ENCODE measurements at regions of chr22 and their contacts with region 1.

Region 1: GRCh38 chr22:24951942-24952836 is at the start of gene KIAA1671:
- DNase-seq: peak in 1 of 2 donors; percentile 88
- H3K4me3 ChIP-seq: peak within 1 kb of the TSS; percentile 82 to 94
- H3K27ac ChIP-seq: peak within 1 kb of the TSS; percentile 39 to 51
- H3K4me1 ChIP-seq: no peaks in the 10 kb centered on the region
- H3K27me3 ChIP-seq: no peaks in the 10 kb centered on the region
- CTCF ChIP-seq: peak; percentile 98 to 100 (median 99)
- total RNA-seq, gene KIAA1671: 79.0 TPM

Region 2: DNA sequence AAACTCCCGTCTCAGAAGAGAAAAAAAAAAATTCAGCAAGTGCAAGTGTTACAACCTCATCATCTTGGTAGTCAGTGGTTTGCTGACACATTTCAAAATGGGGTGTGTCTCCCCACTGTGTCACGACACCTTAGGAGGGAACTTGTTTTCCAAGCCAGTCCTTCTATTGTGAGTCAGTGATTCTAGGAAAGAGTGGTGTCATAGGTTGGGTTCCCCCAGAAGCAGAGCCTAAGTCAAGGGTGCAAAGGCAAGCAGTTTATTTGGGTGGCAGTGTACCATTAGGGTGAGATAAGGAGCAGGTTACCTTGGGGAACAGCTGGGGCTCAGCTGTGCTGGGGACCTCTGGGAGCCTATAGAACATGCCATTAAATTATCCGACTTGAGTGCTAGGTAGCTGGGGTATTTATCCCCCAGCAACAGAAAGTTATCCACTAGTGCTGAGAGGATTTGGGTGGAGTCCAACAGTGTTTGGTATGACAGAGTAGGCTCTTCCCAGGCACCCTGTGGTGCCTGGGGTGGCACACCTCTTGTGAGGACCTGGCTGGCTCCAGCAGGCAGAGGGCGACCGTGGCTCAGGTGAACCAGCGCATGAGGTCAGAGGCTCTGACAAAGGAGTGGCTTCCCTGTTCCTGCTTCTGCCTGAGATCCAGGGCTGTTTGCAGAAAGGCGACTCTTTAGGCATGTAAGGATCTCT is 42.0 kb after region 1 on chr22:
- intact Hi-C with region 1: loop called (anchors 5 kb)
- DNase-seq: no peak
- H3K4me3 ChIP-seq: no peak overlapping the region
- H3K27ac ChIP-seq: no peak overlapping the region
- H3K4me1 ChIP-seq: peaks cover 3 to 24% of the 10 kb centered on the region in 2 donors
- H3K27me3 ChIP-seq: no peaks in the 10 kb centered on the region
- CTCF ChIP-seq: no peak

Measured in ascending aorta (tissue), 2 donors.